ENCODE measurements at regions of chr7 and their contacts with region 1.

Region 1: DNA sequence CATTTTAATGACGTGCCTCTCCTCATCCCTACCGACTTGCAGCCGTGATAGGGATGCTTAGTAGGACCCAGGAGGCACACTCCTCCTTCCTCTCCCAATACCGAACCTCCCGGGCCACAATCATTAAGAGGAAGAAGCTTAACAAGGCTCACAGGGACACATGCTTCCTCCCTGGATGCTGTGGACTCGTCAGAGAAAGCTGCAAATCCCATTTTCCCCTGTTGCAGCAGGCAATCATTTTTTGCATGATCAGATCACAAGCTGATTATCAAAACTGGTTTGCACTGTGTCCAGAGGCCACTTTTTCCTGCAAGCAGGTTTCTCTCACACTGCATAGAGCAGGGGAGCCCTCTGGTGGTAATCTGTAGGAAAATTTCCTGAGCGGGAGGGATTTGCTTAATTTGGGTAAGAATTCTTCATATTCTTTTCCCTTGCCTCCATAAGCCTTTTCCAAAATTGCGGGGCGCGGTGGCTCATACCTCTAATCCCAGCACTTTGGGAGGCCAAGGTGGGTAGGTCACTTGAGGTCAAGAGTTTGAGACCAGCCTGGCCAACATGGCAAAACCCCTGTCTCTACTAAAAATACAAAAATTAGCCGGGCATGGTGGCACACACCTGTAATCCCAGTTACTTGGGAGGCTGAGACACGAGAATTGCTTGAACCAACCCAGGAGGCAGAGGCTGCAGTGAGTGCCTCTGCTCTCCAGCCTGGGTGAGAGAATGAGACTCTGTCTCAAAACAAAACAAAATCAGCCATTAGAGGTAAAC is 16.1 kb upstream of the LAMB4 start:
- DNase-seq: peak; percentile 71
- ATAC-seq: peak; percentile 53
- H3K4me3 ChIP-seq: no peak overlapping the region
- H3K4me3 Mint-ChIP-seq: no peak overlapping the region
- H3K27ac ChIP-seq: no peak overlapping the region
- H3K27ac Mint-ChIP-seq: no peak overlapping the region
- H3K4me1 ChIP-seq: peaks cover 4% of the 10 kb centered on the region in 2 donors
- H3K4me1 Mint-ChIP-seq: no peaks in the 10 kb centered on the region
- H3K27me3 ChIP-seq: peaks cover 0 to 3% (median 1%) of the 10 kb centered on the region in 4 experiments
- H3K27me3 Mint-ChIP-seq: peaks cover 14% of the 10 kb centered on the region
- CTCF ChIP-seq: peak; percentile 91

Region 2: GRCh38 chr7:108114117-108114841 is 32.0 kb before region 1 on chr7:
- CTCF ChIA-PET with region 1: interaction called, 140 read pairs
- POLR2A ChIA-PET with region 1: no interaction called
- intact Hi-C with region 1: loop called (anchors 1 kb)
- DNase-seq: peak; percentile 55
- ATAC-seq: peak; percentile 69
- H3K4me3 ChIP-seq: no peak overlapping the region
- H3K4me3 Mint-ChIP-seq: no peak overlapping the region
- H3K27ac ChIP-seq: no peak overlapping the region
- H3K27ac Mint-ChIP-seq: no peak overlapping the region
- H3K4me1 ChIP-seq: no peaks in the 10 kb centered on the region
- H3K4me1 Mint-ChIP-seq: peaks cover under 1% of the 10 kb centered on the region
- H3K27me3 ChIP-seq: no peaks in the 10 kb centered on the region
- H3K27me3 Mint-ChIP-seq: no peaks in the 10 kb centered on the region
- CTCF ChIP-seq: peak; percentile 74

Region 3: DNA sequence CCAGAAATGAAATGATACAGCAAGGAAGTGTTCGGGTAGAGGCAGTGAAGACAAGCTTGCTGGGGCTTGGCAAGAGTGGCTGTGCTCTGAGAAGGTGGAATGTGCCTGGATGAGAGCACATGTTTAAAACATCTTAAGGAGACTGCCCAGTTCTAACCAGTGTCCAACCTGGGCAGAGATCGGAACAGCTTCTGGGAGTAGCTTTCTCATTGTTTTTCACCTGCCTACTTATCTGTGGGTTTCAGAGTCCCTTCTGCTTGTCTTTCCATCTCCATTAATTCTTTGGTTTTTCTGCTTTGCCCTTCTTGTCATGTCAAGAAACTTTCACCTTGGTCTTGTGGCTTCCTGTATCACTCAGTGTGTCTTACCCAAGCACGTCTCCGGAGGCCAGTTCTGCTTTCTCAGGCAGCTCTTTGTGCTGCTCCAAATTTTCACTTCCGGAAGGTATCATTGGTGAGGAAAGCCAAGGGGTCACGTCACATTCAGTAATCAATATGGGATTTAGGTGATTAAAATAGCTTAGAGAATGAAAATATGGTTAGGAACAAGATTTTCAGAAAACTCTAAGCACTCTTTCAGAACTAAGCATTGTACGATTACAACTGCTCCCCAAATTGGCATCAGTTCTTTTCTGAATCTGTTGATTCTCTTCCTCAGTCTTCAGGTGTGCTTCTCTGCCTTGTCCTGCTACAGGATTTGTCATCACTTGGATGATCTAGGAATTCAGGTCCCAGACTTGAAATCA is 10.6 kb before region 1 on chr7:
- CTCF ChIA-PET with region 1: interaction called, 26 read pairs
- POLR2A ChIA-PET with region 1: interaction called, 4 read pairs
- intact Hi-C with region 1: no loop called
- DNase-seq: peak; percentile 70
- ATAC-seq: peak; percentile 92
- H3K4me3 ChIP-seq: peak overlapping the region in 1 of 5 experiments; percentile 14
- H3K4me3 Mint-ChIP-seq: peak overlapping the region; percentile 64
- H3K27ac ChIP-seq: peak overlapping the region; percentile 74 to 81
- H3K27ac Mint-ChIP-seq: peak overlapping the region; percentile 94
- H3K4me1 ChIP-seq: peaks cover 29 to 32% of the 10 kb centered on the region in 2 donors
- H3K4me1 Mint-ChIP-seq: peaks cover 24% of the 10 kb centered on the region
- H3K27me3 ChIP-seq: no peaks in the 10 kb centered on the region
- H3K27me3 Mint-ChIP-seq: no peaks in the 10 kb centered on the region
- CTCF ChIP-seq: no peak

Region 4: DNA sequence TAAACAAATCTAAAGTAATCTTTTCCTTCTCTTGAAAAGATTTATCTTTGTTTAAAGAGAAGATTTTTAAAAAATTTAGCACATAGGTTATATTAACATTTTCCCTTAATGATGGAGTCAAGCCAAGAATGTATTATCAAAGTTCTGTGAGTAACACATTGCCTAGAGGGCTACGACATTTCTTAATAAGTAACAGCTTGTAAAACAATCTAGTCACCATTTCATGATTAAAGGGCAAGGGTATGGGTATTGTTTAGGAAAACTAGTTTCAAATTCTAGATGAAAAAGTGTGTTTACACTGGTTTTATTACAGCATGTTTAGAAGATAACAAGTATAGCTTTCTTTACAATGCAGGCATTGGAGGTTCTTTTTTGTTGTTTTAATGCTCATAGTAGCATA is 12.5 kb after region 1 on chr7:
- CTCF ChIA-PET with region 1: interaction called, 13 read pairs
- POLR2A ChIA-PET with region 1: no interaction called
- intact Hi-C with region 1: no loop called
- DNase-seq: no peak
- ATAC-seq: no peak
- H3K4me3 ChIP-seq: no peak overlapping the region
- H3K4me3 Mint-ChIP-seq: no peak overlapping the region
- H3K27ac ChIP-seq: no peak overlapping the region
- H3K27ac Mint-ChIP-seq: no peak overlapping the region
- H3K4me1 ChIP-seq: no peaks in the 10 kb centered on the region
- H3K4me1 Mint-ChIP-seq: peaks cover 1% of the 10 kb centered on the region
- H3K27me3 ChIP-seq: peaks cover 0 to 12% (median 0%) of the 10 kb centered on the region in 4 experiments
- H3K27me3 Mint-ChIP-seq: peaks cover 30% of the 10 kb centered on the region
- CTCF ChIP-seq: no peak

Region 5: DNA sequence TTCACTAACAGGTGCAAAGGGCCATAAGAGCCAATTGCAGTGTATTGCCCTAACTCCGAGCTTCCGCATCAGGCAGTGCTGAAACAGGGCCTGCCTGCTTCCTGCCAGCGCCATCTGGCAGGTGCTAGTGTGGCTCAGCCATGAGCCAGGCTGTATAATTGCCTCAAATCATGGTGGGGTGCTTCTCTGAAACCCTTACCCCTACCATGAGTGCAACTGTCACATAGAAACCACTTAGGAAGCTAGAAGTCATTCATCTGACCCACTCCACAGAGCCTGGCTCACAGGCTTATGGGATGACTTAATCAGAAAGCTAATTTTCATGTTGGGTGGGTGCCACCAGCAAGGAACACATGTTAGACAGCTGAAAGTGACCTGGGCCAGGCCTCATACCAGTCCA is 117.2 kb after region 1 on chr7:
- CTCF ChIA-PET with region 1: no interaction called
- POLR2A ChIA-PET with region 1: no interaction called
- intact Hi-C with region 1: no loop called
- DNase-seq: no peak
- ATAC-seq: no peak
- H3K4me3 ChIP-seq: no peak overlapping the region
- H3K4me3 Mint-ChIP-seq: no peak overlapping the region
- H3K27ac ChIP-seq: no peak overlapping the region
- H3K27ac Mint-ChIP-seq: no peak overlapping the region
- H3K4me1 ChIP-seq: no peaks in the 10 kb centered on the region
- H3K4me1 Mint-ChIP-seq: no peaks in the 10 kb centered on the region
- H3K27me3 ChIP-seq: peaks cover 0 to 4% (median 0%) of the 10 kb centered on the region in 4 experiments
- H3K27me3 Mint-ChIP-seq: peaks cover 7% of the 10 kb centered on the region
- CTCF ChIP-seq: no peak